Right ventricle myocardium inferior (tissue), 1 donor: ENCODE measurements at regions of chrX and their contacts with region 1.

Region 1: GRCh38 chrX:48508400-48509244 is at the start of gene PORCN:
- DNase-seq: peak; percentile 92
- ATAC-seq: peak; percentile 96
- total RNA-seq, gene PORCN: 13.5 TPM

Region 2: DNA sequence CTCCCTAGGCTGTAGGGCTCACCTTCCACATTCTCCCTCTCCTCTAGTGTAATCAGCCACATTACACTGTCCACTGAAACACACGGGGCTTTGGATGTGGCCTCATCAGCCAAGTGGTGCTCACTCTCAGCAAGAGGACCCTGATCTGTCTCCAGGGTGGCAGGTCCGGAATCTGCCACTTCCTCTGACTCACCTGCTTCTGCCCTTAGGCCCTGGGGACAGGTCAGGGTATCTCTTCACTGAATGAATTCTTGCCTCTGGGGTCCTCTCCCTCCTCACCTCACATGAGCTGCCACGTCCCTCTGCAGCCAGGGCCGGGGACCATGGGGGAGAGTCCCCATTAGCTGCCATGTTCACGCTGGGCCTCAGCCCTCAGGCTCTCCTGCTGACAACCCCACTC is 1041.5 kb before region 1 on chrX:
- intact Hi-C with region 1: no loop called
- DNase-seq: no peak
- ATAC-seq: no peak

Region 3: GRCh38 chrX:48083212-48083611 is 425.4 kb before region 1 on chrX:
- intact Hi-C with region 1: loop called (anchors 5 kb)
- DNase-seq: no peak
- ATAC-seq: peak; percentile 62